Esophagus squamous epithelium (tissue), 5 donors: ENCODE measurements at regions of chr16 and their contacts with region 1.

Region 1: GRCh38 chr16:5590416-5590815 is 492.8 kb upstream of the EEF2KMT start:
- DNase-seq: no peak
- H3K4me3 ChIP-seq: no peak overlapping the region
- H3K27ac ChIP-seq: no peak overlapping the region
- H3K4me1 ChIP-seq: no peaks in the 10 kb centered on the region
- H3K27me3 ChIP-seq: no peaks in the 10 kb centered on the region
- CTCF ChIP-seq: no peak
- POLR2A ChIP-seq: no peak

Region 2: DNA sequence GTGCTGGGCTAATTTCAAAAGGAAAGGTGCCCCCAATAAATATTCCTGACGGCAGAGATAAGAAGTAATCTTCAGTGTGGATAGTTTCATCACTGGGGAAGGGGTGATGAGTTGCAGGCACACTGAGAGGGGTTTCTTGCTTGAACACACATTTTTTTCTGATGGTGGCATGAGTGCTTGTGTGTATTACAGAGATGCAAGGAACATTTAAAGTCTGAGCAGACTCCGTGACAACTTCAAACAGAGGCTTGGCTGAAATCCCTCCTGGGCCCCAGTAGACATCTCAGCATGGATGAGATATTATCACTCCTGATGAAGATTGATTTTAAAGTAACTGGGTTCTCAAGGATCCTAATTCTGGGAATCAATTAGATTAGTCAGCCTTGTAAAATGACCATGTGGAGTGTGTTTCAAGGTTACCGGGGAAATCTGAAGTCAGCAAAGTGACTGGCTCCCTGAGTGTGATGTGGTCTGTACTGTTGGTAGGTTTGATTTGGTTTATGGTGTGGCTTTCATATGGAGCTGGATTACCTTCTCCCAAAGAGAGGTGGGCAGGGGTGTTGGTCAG is 57.0 kb before region 1 on chr16:
- intact Hi-C with region 1: loop called (anchors 10 kb)
- DNase-seq: no peak
- H3K4me3 ChIP-seq: no peak overlapping the region
- H3K27ac ChIP-seq: no peak overlapping the region
- H3K4me1 ChIP-seq: no peaks in the 10 kb centered on the region
- H3K27me3 ChIP-seq: no peaks in the 10 kb centered on the region
- CTCF ChIP-seq: no peak
- POLR2A ChIP-seq: no peak